ENCODE measurements at regions of chr9 and their contacts with region 1.

Region 1: DNA sequence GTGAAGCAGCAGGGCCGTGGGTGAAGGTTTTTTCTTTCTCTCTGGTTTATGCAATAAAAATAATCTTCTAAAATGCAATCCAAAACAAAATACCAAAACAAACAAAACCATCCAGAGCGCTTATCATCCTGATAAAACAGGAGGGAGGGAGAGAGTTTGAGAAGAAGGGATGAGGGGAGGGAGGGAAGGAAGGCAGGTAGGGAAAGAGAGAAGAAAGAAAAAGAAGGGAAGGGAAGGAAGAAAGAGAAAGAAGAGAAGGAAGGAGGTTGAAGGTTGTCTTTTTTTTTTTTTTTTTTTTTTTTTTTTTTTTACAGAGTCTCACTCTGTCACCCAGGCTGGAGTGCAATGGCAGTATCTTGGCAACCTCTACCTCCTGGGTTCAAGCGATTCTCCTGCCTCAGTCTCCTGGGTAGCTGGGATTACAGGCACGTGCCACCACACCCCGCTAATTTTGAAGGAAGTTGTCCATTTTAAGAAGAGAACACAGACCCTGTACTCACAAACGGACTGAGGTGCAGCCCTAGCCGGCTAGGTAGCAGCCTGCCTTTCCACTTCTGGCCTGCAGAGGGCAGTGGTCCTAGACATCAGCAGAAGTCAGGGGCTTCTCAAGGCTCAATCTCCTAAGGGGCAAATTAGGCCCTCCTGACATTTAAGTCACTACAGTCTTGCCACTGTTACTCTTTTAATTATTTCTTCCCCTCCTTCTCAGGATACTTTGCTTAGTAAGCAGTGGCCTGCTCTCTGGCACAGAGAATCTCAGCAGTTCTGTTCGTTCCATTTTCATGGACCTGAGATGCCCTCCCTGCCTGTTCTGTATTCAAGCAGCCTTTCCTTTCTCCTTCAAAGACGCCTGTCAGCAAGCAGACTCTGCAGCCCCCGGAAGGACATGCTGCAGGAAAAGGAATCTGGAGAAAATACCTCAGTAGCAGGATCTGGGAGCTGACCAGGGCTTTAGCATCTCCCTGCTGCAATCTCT is 76.4 kb downstream of the EPB41L4B start:
- DNase-seq: peak; percentile 71
- H3K4me3 ChIP-seq: no peak overlapping the region
- H3K27ac ChIP-seq: no peak overlapping the region
- H3K4me1 ChIP-seq: no peaks in the 10 kb centered on the region
- H3K27me3 ChIP-seq: peaks cover 3% of the 10 kb centered on the region
- CTCF ChIP-seq: peak; percentile 88

Region 2: GRCh38 chr9:109320742-109321448 is 76.5 kb after region 1 on chr9 and contains the start of gene EPB41L4B:
- CTCF ChIA-PET with region 1: no interaction called
- POLR2A ChIA-PET with region 1: no interaction called
- intact Hi-C with region 1: loop called (anchors 5 kb)
- DNase-seq: peak; percentile 73
- H3K4me3 ChIP-seq: peak within 1 kb of the TSS; percentile 33
- H3K27ac ChIP-seq: no peak within 1 kb of the TSS
- H3K4me1 ChIP-seq: no peaks in the 10 kb centered on the region
- H3K27me3 ChIP-seq: peaks cover 69% of the 10 kb centered on the region
- CTCF ChIP-seq: peak; percentile 85
- total RNA-seq, gene EPB41L4B: 0.07 TPM in 1 of 2 replicates, not detected in the other

Region 3: DNA sequence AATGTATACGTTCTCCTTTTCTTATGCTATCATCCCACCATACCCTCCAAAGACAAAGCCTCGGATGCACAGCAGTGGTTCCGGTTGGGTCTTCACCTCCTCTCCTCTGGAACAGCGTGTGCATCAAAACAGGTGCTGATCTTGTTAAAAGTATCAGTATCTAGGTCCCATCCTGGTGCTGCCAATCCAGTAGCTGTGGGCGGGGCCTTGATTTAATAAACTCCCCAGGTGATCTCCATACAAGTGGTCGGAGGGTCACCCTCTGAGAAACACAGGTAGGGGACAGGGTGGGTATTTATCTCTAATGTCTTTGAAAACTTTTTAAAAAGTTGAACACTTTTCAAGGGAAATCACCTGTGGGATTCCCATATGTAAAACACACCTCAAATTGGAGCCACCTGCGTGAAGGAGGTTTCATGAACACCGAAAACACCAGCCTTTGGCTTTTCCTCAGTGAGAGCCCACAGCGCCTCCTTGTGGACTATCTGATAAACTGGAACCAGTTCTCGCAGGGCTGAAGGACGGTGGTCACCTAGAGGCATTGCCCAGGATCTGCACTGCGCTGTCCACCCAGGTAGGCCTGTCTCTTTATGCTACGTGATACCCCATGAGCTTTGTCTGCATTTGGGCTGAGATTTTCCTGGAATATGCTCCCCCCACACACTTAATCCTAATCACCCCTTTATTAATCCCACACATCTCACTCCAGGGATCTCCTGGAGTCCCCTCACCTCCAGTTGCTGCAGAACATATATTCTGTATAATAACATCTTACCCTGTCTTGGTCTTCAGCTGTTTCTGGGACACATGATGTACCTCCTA is 156.9 kb after region 1 on chr9:
- CTCF ChIA-PET with region 1: no interaction called
- POLR2A ChIA-PET with region 1: no interaction called
- intact Hi-C with region 1: loop called (anchors 10 kb)
- DNase-seq: peak; percentile 40
- H3K4me3 ChIP-seq: no peak overlapping the region
- H3K27ac ChIP-seq: no peak overlapping the region
- H3K4me1 ChIP-seq: no peaks in the 10 kb centered on the region
- H3K27me3 ChIP-seq: no peaks in the 10 kb centered on the region
- CTCF ChIP-seq: peak; percentile 84

Region 4: DNA sequence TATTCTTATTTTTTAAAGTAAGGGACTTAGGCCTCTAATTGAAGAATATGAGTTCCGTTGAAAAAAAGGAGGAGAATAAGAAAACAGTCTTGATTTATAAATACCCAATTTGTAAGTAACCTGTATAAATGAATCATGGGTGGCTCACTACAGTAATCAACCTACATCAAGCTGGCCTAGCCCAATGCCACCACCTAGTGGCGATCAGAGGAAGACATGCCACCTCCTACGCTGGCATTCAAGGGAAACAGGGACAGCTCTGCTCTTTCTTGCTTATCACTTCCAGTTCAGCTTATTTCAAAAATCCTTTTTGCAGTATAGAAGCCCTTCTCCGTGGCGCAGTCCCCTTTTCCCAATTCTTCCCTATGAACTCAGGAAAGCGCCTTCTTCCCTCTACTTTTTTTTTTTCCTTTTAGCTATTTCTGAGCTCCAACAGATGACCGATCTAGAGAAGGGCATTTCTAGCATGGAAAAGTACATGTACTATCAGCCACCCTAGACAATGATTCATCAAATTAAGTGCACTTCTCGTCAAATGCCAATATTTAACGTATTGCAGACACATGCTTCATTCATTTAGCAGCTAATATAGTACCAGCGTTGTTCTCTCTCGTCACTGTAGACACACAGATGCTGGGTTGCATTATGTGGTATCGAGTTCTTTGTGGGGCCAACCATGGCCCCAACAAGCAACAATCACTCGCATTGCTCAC is 225.4 kb after region 1 on chr9:
- CTCF ChIA-PET with region 1: interaction called, 7 read pairs
- POLR2A ChIA-PET with region 1: no interaction called
- intact Hi-C with region 1: loop called (anchors 5 kb)
- DNase-seq: peak; percentile 76
- H3K4me3 ChIP-seq: no peak overlapping the region
- H3K27ac ChIP-seq: no peak overlapping the region
- H3K4me1 ChIP-seq: no peaks in the 10 kb centered on the region
- H3K27me3 ChIP-seq: no peaks in the 10 kb centered on the region
- CTCF ChIP-seq: peak; percentile 89

Region 5: GRCh38 chr9:109520478-109521132 is 276.2 kb after region 1 on chr9:
- CTCF ChIA-PET with region 1: no interaction called
- POLR2A ChIA-PET with region 1: no interaction called
- intact Hi-C with region 1: loop called (anchors 5 kb)
- DNase-seq: peak; percentile 76
- H3K4me3 ChIP-seq: no peak overlapping the region
- H3K27ac ChIP-seq: no peak overlapping the region
- H3K4me1 ChIP-seq: no peaks in the 10 kb centered on the region
- H3K27me3 ChIP-seq: peaks cover 13% of the 10 kb centered on the region
- CTCF ChIP-seq: peak; percentile 91

Measured in A673 (cell line).